Activated B cell treated with CpG ODN at 0.5 μM for 24 hours (primary cell): ENCODE measurements at regions of chr6 and their contacts with region 1.

Region 1: DNA sequence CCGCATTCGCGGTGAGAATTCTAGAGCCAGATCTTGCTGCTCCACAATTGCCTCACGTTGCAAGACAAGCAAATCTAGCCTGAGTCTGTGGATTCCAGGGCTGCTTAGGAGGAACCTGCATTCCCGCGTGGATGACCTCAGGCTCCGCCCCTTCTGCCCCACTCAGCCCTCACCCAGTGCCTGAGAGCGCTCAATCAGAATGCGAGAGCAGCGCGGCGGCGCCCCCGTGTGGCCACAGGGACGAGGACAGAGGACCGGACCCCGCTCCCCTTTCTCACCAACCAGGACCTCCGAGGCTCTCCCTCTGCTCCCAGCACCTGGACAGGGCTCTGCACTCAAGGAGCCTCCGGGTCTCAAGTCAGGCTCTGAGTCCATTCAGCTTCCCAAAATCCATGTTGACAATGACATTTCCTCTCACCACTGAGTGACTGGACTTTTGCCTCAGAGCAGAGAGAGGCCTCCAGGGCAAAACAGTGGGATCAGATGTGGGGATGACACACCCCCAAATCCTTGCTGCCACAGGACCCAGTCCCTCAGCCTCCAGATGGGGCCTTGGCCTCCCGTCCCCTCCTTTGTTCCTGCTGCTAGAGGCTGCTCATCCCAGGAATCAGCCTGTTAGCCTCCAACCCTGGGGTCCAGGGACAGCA is 52.0 kb downstream of the RPP21 start:
- DNase-seq: peak; percentile 83
- ATAC-seq: peak; percentile 100
- H3K4me3 Mint-ChIP-seq: no peak overlapping the region
- H3K27ac Mint-ChIP-seq: no peak overlapping the region
- H3K4me1 Mint-ChIP-seq: peaks cover 4% of the 10 kb centered on the region
- H3K27me3 Mint-ChIP-seq: peaks cover 26% of the 10 kb centered on the region
- CTCF ChIP-seq: peak; percentile 41

Region 2: GRCh38 chr6:30219244-30219643 is 177.7 kb before region 1 on chr6:
- CTCF ChIA-PET with region 1: interaction called, 7 read pairs
- POLR2A ChIA-PET with region 1: no interaction called
- intact Hi-C with region 1: loop called (anchors 1 kb)
- DNase-seq: no peak
- ATAC-seq: no peak
- H3K4me3 Mint-ChIP-seq: no peak overlapping the region
- H3K27ac Mint-ChIP-seq: no peak overlapping the region
- H3K4me1 Mint-ChIP-seq: peaks cover 15% of the 10 kb centered on the region
- H3K27me3 Mint-ChIP-seq: peaks cover 3% of the 10 kb centered on the region
- CTCF ChIP-seq: peak; percentile 19

Region 3: DNA sequence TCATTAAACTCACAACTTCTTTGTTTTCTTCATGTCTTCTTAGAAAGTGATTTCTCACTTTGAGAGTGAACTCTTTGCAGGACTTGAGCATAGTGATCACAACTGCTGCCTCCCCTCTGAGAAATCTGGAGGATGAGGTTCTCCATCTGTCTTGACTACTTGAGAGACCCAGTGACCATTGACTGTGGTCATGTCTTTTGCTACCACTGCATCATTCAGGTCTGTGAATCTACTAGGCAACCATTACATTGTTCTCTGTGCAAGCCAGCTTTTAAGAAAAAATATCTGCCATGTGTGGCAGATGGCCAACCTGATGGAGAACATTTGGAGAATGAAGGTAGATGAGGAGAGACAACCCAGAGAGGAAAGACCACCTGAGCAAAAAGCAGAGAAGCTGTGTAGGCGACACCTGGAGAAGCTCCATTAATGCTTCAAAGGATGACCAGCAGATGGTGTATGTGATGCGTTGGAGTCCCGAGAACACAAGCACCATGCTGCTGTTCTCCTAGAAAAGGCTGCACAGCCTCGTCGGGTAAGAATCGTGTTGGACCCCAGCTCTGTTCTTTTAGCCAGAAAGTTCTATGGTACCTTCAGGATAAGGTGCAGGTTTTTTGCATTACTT is 158.7 kb before region 1 on chr6:
- CTCF ChIA-PET with region 1: interaction called, 23 read pairs
- POLR2A ChIA-PET with region 1: no interaction called
- intact Hi-C with region 1: loop called (anchors 1 kb)
- DNase-seq: no peak
- ATAC-seq: peak; percentile 61
- H3K4me3 Mint-ChIP-seq: no peak overlapping the region
- H3K27ac Mint-ChIP-seq: no peak overlapping the region
- H3K4me1 Mint-ChIP-seq: no peaks in the 10 kb centered on the region
- H3K27me3 Mint-ChIP-seq: peaks cover 25% of the 10 kb centered on the region
- CTCF ChIP-seq: no peak

Region 4: DNA sequence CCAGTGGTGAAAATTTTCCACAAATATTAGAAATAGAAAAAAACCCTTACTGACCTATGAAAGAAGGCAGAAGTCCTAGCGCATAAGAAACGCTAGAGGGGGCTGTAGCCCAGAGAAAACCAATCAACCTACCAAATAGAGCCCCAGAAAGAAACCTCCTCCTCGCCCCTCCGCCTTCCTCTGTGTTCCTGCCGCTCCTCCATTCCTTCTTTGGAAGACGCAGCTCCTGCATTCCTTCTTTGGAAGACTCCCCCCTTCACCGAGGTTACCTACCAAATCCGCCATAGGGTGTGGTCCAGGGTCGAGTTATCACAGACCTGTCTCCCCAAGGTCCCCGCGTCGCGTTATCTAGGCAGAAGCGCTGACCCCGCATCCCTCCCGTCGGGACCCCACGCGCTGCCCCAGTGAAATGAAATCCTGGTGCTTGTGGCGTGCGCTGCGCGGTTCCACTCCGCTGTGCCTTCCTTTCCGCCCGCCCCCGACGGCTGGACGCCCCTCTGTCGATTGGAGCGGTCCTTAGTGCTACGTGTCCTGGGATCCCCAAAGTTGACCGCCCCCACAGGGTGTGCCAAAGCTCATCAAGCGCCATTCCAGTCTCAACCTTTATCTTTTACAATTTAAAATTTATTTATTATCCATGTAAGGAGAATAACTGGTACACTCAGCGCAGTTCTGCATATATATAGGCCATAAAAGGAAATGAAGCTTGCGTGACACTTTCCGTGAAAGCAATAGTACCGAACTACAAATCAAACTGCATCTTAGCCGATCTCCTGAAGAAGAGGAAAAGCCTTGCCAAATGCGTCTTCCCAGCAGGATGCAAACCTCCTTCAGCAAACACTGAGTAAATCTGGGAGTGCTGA is 39.0 kb before region 1 on chr6:
- CTCF ChIA-PET with region 1: interaction called, 20 read pairs
- POLR2A ChIA-PET with region 1: no interaction called
- intact Hi-C with region 1: loop called (anchors 1 kb)
- DNase-seq: peak; percentile 33
- ATAC-seq: peak; percentile 84
- H3K4me3 Mint-ChIP-seq: peak overlapping the region; percentile 84
- H3K27ac Mint-ChIP-seq: no peak overlapping the region
- H3K4me1 Mint-ChIP-seq: peaks cover 7% of the 10 kb centered on the region
- H3K27me3 Mint-ChIP-seq: peaks cover 44% of the 10 kb centered on the region
- CTCF ChIP-seq: peak; percentile 50